ENCODE measurements at regions of chr7 and their contacts with region 1.

Region 1: DNA sequence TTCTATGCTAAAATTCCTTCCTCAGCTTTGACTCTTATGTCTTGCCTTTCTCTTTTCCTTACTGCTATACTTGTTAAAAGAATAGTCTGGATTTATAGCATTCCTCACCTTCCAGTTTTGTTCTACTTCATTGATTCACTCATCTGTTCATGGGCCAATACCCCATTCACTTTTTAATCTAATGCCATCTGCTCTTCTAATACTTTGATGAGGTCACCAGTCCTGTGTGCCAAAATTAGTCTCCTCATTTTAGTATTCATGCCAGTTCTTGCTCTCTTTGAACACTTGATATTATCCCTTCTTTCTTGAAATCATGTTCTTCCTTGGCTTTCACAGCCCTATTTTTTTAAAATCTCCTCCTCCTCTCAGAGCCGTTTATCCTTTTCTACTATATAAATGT is 19.4 kb downstream of the STK17A start:
- DNase-seq: no peak
- ATAC-seq: no peak
- H3K4me3 Mint-ChIP-seq: no peak overlapping the region
- H3K27ac Mint-ChIP-seq: no peak overlapping the region
- H3K4me1 Mint-ChIP-seq: peaks cover 38% of the 10 kb centered on the region
- H3K27me3 Mint-ChIP-seq: no peaks in the 10 kb centered on the region
- CTCF ChIP-seq: no peak

Region 2: DNA sequence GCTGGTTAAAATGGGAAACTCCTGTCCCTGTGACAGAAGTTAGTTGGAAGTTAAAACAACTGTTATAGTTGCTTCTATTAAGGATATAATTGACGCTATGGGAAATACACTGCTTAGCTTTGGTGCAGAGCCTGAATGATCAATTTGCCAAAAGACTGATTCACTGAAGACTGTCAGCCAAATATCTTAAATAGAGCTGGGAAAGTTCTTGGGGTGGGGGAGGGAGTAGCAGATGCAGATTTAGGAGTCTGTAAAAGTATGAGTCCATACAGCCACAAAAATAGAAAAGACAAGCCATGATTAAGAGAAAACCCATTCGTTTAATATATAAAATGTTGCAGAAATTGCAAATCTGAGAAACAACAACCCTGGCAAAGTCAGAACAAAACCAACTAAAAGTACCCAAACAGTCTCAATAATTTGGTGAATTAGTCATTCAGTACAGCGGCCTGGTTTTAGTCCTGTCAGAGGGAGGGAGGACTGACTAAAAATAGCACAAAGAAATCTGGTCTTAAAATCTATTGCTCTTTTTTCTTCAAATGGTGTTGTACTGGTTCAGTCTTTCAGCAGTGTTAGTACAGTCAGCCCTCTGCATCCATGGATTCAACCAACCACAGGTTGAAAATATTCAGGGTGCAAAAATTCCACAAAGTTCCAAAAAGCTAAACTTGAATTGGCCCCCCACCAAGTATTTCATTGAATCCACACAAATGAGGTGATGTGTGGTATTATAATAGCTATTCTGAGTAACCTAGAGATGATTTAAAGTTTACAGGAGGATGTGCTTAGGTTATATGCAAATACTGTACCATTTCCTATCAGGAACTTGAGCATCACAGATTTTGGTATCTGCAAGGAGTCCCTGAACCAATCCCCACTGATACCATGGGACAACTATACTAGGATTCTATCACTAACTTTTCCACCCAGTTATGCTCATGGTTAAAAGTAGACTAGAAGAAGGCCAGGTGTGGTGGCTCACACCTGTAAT is 10.6 kb after region 1 on chr7:
- CTCF ChIA-PET with region 1: interaction called, 3 read pairs
- POLR2A ChIA-PET with region 1: no interaction called
- intact Hi-C with region 1: loop called (anchors 1 kb)
- DNase-seq: no peak
- ATAC-seq: peak; percentile 58
- H3K4me3 Mint-ChIP-seq: peak overlapping the region; percentile 49
- H3K27ac Mint-ChIP-seq: peak overlapping the region; percentile 86
- H3K4me1 Mint-ChIP-seq: peaks cover 60% of the 10 kb centered on the region
- H3K27me3 Mint-ChIP-seq: no peaks in the 10 kb centered on the region
- CTCF ChIP-seq: no peak

Region 3: DNA sequence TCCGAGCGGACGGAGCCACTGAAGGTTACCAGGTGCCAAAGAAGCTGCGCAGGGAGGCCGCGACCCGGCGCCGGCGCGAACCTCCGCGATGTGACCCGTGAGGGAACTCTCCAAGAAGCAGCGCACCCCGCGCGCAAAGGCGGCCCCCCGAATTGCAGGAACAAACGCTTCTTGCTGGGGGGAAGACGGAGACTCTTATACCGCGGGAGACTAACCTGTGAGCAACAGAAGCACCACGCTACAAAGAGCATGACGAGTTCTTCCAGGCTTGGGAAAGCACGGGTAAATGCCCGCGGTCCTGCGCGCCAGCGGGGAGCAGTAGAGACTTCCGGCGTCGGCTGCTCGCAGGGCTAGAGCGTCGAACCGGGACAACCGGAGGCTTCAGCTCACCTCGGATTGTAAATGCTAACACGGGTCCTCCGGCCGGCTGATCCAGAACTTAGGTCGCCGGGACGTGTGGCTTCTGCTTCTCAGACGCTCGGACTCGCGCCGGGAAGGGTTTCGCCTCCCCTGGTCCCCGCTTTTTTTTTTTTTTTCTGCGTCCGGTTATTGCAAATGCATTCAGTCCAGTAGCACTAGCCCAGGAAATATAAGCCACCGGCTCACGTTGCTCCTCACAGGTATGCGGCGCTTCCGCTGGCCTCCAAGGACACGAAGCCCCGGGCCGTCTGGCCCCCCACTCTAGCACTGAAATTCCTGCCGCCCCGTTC is 127.1 kb after region 1 on chr7 and contains the start of gene COA1:
- CTCF ChIA-PET with region 1: no interaction called
- POLR2A ChIA-PET with region 1: no interaction called
- intact Hi-C with region 1: no loop called
- DNase-seq: peak; percentile 75
- ATAC-seq: peak; percentile 92
- H3K4me3 Mint-ChIP-seq: peak within 1 kb of the TSS; percentile 95
- H3K27ac Mint-ChIP-seq: peak within 1 kb of the TSS; percentile 88
- H3K4me1 Mint-ChIP-seq: peaks cover 40% of the 10 kb centered on the region
- H3K27me3 Mint-ChIP-seq: no peaks in the 10 kb centered on the region
- CTCF ChIP-seq: no peak
- total RNA-seq, gene COA1: 49.2 and 56.9 TPM in 2 replicates

Region 4: DNA sequence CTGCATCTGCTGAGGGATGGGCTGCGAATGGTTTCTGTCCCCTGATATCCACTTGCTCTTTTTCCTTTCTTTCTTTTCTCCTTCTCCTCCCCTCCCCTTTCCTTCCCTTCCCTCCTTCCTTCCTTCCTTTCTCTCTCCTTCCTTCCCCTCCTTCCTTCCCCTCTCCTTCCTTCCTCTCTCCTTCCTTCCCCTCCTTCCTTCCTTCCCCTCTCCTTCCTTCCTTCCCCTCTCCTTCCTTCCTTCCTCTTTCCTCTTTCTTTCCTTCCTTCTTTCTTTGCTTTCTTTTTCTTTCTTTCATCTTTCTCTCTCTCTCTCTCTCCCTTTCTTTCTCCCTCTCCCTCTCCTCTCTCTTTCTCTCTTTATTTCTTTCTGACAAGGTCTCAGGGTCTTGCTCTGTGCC is 375.3 kb after region 1 on chr7:
- CTCF ChIA-PET with region 1: no interaction called
- POLR2A ChIA-PET with region 1: no interaction called
- intact Hi-C with region 1: no loop called
- DNase-seq: no peak
- ATAC-seq: no peak
- H3K4me3 Mint-ChIP-seq: no peak overlapping the region
- H3K27ac Mint-ChIP-seq: no peak overlapping the region
- H3K4me1 Mint-ChIP-seq: no peaks in the 10 kb centered on the region
- H3K27me3 Mint-ChIP-seq: no peaks in the 10 kb centered on the region
- CTCF ChIP-seq: no peak

Region 5: DNA sequence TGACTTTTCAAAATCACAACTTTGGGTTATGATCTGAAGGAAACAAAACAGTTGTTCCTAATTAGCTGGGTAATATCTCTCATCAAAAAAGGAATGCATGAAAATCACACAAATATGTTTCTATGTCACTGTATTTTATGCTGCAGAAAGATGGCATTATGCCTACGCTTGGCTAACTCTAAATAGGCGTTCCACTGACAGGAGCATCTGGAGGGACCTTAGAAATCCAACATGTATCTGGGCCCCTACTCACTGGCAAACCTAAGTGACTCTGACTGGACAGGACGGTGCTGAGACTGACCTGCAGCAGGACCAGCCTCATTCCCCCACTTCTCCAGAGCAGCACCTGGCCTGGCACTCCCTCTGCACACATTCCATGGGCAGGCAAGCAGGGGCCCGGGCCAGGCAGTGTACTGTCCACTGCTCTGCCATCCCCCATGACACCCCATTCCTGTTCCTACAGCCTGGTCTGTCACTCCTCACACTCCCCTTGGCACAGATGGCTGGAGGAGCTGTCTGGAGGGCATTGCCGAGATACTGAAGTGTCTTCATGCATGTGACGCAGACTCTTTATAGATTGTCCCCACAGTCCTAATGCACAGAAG is 541.5 kb after region 1 on chr7:
- CTCF ChIA-PET with region 1: no interaction called
- POLR2A ChIA-PET with region 1: no interaction called
- intact Hi-C with region 1: no loop called
- DNase-seq: no peak
- ATAC-seq: no peak
- H3K4me3 Mint-ChIP-seq: no peak overlapping the region
- H3K27ac Mint-ChIP-seq: no peak overlapping the region
- H3K4me1 Mint-ChIP-seq: peaks cover 11% of the 10 kb centered on the region
- H3K27me3 Mint-ChIP-seq: no peaks in the 10 kb centered on the region
- CTCF ChIP-seq: no peak

Measured in activated B cell treated with CpG ODN at 0.5 μM for 24 hours (primary cell).